ENCODE measurements at regions of chr2 and their contacts with region 1.

Region 1: DNA sequence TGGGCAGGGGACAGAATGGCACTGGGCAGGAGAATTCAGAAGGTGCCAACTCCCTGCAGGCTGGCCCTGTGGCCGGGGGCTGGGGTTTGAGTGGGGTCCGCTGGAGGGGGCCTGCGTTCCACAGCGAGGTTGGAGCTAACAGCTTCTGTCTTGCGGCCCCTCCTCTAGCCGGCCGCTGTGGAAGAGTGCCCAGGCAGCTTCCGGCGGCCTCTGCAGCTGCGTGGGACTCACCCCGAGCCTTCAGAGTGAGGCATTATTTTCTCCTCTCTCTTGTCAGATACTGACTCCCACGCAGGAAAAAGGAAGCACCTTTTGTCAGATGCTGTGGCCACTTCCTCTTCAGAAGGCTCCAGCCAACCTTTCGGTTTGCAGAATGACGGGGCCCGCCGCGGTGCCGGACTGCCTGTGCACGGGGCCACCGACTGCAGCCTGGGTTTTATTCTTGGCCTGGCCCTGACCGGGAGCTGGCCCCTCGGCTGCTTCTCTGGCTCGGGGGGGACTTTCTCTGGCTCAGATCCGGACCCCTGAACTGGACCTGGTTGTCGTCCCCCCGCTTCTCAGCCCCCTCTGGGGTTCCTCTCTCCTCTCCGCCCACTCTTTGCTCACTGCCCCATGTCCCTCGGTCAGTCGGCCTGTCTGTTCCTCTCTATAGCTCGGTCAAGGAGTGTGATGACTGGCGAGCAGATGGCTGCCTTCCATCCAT is 40.1 kb downstream of the ARHGAP25 start:
- DNase-seq: peak in 7 of 9 donors; percentile 33 to 71 (median 45)
- ATAC-seq: peak; percentile 81
- H3K4me3 ChIP-seq: peak overlapping the region; percentile 69
- H3K4me3 Mint-ChIP-seq: peak overlapping the region; percentile 76 to 94 (median 84)
- H3K27ac ChIP-seq: peak overlapping the region; percentile 82
- H3K27ac Mint-ChIP-seq: peak overlapping the region in 8 of 9 donors; percentile 87 to 99 (median 98)
- H3K4me1 ChIP-seq: peaks cover 86 to 87% of the 10 kb centered on the region in 2 donors
- H3K4me1 Mint-ChIP-seq: peaks cover 84 to 96% (median 90%) of the 10 kb centered on the region in 7 donors
- H3K27me3 ChIP-seq: no peaks in the 10 kb centered on the region
- H3K27me3 Mint-ChIP-seq: no peaks in the 10 kb centered on the region

Region 2: DNA sequence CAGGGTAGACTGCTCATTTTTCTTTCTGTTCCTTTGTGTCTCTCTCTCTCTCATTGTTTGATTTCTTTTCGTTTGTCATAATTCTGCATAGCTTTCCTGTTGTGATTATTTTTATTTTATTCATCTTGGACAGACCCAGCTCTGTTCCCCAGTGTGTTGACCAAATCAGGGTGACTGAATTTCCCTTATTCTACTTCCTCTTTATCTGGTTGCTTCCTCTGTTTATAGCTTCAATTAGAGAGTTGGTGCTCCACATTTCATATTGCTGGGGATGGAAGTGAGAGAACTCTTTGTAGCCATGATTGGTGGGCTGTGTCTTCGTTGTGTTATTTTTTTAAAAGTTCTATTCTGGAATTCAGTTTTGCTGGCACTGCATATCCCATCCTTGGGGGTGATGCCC is 112.3 kb before region 1 on chr2:
- CTCF ChIA-PET with region 1: no interaction called
- POLR2A ChIA-PET with region 1: no interaction called
- intact Hi-C with region 1: no loop called
- DNase-seq: no peak
- ATAC-seq: peak; percentile 54
- H3K4me3 ChIP-seq: no peak overlapping the region
- H3K4me3 Mint-ChIP-seq: no peak overlapping the region
- H3K27ac ChIP-seq: no peak overlapping the region
- H3K27ac Mint-ChIP-seq: no peak overlapping the region
- H3K4me1 ChIP-seq: no peaks in the 10 kb centered on the region
- H3K4me1 Mint-ChIP-seq: peaks cover 0 to 7% (median 0%) of the 10 kb centered on the region in 7 donors
- H3K27me3 ChIP-seq: no peaks in the 10 kb centered on the region
- H3K27me3 Mint-ChIP-seq: peaks cover 20 to 53% (median 30%) of the 10 kb centered on the region in 5 donors

Region 3: GRCh38 chr2:68789603-68790002 is 14.9 kb after region 1 on chr2:
- CTCF ChIA-PET with region 1: interaction called, 3 read pairs
- POLR2A ChIA-PET with region 1: interaction called, 38 read pairs
- intact Hi-C with region 1: loop called (anchors 1 to 2 kb)
- DNase-seq: no peak
- ATAC-seq: peak; percentile 73
- H3K4me3 ChIP-seq: no peak overlapping the region
- H3K4me3 Mint-ChIP-seq: no peak overlapping the region
- H3K27ac ChIP-seq: peak overlapping the region; percentile 40
- H3K27ac Mint-ChIP-seq: peak overlapping the region in 6 of 9 donors; percentile 13 to 88 (median 44)
- H3K4me1 ChIP-seq: peaks cover 10 to 44% of the 10 kb centered on the region in 2 donors
- H3K4me1 Mint-ChIP-seq: peaks cover 29 to 48% (median 44%) of the 10 kb centered on the region in 7 donors
- H3K27me3 ChIP-seq: no peaks in the 10 kb centered on the region
- H3K27me3 Mint-ChIP-seq: no peaks in the 10 kb centered on the region

Region 4: DNA sequence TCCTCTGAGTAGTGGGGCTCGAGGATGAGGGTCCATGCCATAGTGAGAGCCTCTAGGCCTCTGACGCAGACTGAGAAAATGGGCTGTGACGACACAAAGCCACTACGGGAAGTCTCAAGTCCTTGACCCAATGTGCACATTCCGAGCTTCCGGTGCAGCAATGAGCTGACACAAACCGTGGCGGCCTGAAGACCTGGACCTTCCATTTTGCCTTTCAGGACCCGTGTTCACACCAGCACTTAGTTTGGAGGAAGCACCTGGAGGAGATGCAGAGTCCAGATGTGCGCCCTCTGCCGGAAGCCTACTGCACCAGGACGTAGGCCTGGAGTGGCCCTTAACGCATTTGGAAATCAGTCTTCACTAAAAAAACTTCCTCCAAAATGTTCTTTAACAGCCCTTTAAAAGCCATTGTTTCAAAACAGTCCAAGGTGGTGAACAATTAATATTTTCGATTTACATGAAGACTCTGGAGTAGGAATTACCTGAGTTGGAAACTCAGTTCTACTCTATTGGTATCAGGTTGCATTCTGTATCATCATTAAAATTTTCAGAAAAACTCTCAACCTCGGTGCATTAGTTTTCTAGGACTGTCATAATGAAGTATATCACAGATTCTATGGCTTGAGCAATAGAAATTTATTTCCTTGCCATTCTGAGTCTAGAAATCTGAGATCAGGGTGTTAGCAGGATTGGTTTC is 62.6 kb after region 1 on chr2:
- CTCF ChIA-PET with region 1: interaction called, 7 read pairs
- POLR2A ChIA-PET with region 1: interaction called, 3 read pairs
- intact Hi-C with region 1: loop called in 1 of 2 experiments (anchors 1 kb)
- DNase-seq: peak; percentile 25 to 67 (median 57)
- ATAC-seq: peak; percentile 77
- H3K4me3 ChIP-seq: no peak overlapping the region
- H3K4me3 Mint-ChIP-seq: no peak overlapping the region
- H3K27ac ChIP-seq: no peak overlapping the region
- H3K27ac Mint-ChIP-seq: peak overlapping the region in 2 of 9 donors; percentile 15 to 75
- H3K4me1 ChIP-seq: peaks cover 0 to 13% of the 10 kb centered on the region in 2 donors
- H3K4me1 Mint-ChIP-seq: peaks cover 15 to 51% (median 43%) of the 10 kb centered on the region in 7 donors
- H3K27me3 ChIP-seq: no peaks in the 10 kb centered on the region
- H3K27me3 Mint-ChIP-seq: no peaks in the 10 kb centered on the region